Psoas muscle (tissue), 8 donors: ENCODE measurements at regions of chr6 and their contacts with region 1.

Region 1: GRCh38 chr6:105992315-105992961 is 93.7 kb upstream of the PRDM1 start:
- DNase-seq: peak; percentile 78 to 89
- ATAC-seq: peak; percentile 88 to 95 (median 93)
- H3K4me3 ChIP-seq: peak overlapping the region; percentile 75
- H3K27ac ChIP-seq: no peak overlapping the region
- H3K4me1 ChIP-seq: peaks cover 18% of the 10 kb centered on the region
- H3K27me3 ChIP-seq: peaks cover 0 to 80% (median 13%) of the 10 kb centered on the region in 3 donors
- CTCF ChIP-seq: no peak

Region 2: DNA sequence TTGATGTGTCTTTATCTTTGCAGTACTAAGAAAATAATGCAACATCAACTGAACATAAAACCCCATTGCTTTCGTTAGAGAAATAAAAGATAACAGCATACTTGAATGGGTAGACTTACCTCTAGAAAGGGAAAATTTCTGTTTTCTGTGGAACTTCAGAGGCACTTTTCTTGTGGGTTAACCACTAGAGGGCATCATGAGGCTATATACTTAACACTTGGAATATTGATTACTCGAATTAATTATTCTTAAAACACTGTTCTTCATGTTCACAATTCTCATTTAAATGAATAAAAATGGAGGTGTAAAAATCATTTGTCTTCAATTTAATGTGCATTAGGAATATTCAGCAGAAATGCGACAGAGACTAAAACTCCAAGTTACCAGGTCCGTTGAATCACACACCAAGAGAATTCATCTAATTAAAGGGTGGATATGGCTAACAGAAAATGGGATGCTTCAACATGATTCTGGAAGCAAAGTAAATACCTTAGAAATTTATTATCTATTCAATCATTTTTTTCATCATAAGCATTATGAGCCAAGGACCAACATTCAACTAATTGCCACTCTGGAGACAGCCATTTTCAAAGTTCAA is 258.8 kb before region 1 on chr6:
- intact Hi-C with region 1: loop called in 1 of 2 experiments (anchors 5 kb)
- DNase-seq: no peak
- ATAC-seq: no peak
- H3K4me3 ChIP-seq: no peak overlapping the region
- H3K27ac ChIP-seq: no peak overlapping the region
- H3K4me1 ChIP-seq: no peaks in the 10 kb centered on the region
- H3K27me3 ChIP-seq: no peaks in the 10 kb centered on the region
- CTCF ChIP-seq: peak; percentile 63

Region 3: DNA sequence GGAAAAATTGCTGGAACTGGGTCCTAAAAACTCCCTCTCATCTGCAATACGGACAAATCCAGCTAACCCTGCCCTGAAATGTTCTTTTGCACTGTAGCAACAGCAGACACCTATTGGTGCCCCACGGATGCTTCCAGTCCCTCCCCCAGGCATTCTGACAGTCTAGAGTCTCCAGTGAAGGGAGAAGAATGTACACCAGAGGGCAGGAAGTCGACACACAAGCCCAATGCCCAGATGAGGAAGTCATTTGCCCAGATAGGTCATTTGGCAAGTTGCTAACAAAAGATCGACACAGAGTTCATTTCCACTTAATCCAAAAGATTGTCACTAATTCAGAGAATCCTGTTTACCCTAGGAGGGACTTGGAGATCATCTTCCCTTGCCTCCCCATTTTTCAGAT is 199.3 kb before region 1 on chr6:
- intact Hi-C with region 1: loop called in 1 of 2 experiments (anchors 10 kb)
- DNase-seq: no peak
- ATAC-seq: no peak
- H3K4me3 ChIP-seq: no peak overlapping the region
- H3K27ac ChIP-seq: peak overlapping the region; percentile 78
- H3K4me1 ChIP-seq: peaks cover 40% of the 10 kb centered on the region
- H3K27me3 ChIP-seq: no peaks in the 10 kb centered on the region
- CTCF ChIP-seq: peak; percentile 15

Region 4: GRCh38 chr6:106124437-106125430 is 132.3 kb after region 1 on chr6:
- intact Hi-C with region 1: no loop called
- DNase-seq: no peak
- ATAC-seq: no peak
- H3K4me3 ChIP-seq: no peak overlapping the region
- H3K27ac ChIP-seq: no peak overlapping the region
- H3K4me1 ChIP-seq: no peaks in the 10 kb centered on the region
- H3K27me3 ChIP-seq: no peaks in the 10 kb centered on the region
- CTCF ChIP-seq: no peak

Region 5: DNA sequence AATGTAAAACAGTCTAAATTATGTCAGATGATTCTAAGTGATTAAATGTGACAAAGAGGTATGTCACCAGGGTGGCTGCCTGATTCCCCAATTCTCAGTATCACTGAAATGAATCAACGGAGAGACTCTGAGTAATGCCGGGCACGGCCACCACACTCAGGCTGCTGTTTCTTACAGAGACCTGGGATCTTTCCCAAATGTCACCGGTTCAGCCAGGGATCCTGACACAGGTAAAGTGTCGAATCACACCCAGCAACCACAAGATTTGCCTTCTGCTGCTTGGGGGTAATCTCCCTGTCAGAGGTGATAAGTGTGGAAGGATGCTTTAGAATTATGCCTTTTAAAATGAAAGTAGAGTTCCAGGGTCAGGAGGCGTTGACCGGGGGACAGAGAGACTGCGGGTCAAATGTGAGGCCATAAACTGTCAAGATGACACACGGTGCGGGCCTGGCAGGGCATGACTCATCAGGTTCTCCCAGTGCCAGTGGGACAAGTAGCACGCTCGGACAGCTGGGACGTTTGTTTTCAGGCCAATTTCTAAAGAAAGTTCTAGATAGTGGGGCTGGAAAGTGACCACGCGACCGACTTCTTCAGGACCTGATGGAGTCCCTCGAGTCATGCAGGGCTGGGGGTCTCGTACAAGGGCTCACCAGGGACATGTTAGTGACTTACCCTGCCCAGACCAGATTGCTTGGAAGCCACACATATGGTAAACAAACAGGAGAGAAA is 142.6 kb after region 1 on chr6:
- intact Hi-C with region 1: no loop called
- DNase-seq: peak; percentile 48 to 60
- ATAC-seq: peak; percentile 92 to 98 (median 94)
- H3K4me3 ChIP-seq: no peak overlapping the region
- H3K27ac ChIP-seq: no peak overlapping the region
- H3K4me1 ChIP-seq: peaks cover 3% of the 10 kb centered on the region
- H3K27me3 ChIP-seq: no peaks in the 10 kb centered on the region
- CTCF ChIP-seq: no peak